ENCODE measurements at regions of chr12 and their contacts with region 1.

Region 1: GRCh38 chr12:130013771-130014484 is 110.1 kb upstream of the TMEM132D start:
- DNase-seq: peak; percentile 62 to 87
- H3K4me3 ChIP-seq: peak overlapping the region in 1 of 4 experiments; percentile 45; a peak in 2 of 8 replicates
- H3K27ac ChIP-seq: no peak overlapping the region
- H3K4me1 ChIP-seq: peaks cover 0 to 11% (median 5%) of the 10 kb centered on the region in 4 experiments; a peak in 3 of 7 replicates
- H3K27me3 ChIP-seq: peaks cover 0 to 12% (median 7%) of the 10 kb centered on the region in 4 experiments; a peak in 3 of 7 replicates
- CTCF ChIP-seq: peak; percentile 81 to 92 (median 83)
- EP300 ChIP-seq: no peak
- POLR2A ChIP-seq: no peak
- RAD21 ChIP-seq: peak; percentile 88 to 93

Region 2: DNA sequence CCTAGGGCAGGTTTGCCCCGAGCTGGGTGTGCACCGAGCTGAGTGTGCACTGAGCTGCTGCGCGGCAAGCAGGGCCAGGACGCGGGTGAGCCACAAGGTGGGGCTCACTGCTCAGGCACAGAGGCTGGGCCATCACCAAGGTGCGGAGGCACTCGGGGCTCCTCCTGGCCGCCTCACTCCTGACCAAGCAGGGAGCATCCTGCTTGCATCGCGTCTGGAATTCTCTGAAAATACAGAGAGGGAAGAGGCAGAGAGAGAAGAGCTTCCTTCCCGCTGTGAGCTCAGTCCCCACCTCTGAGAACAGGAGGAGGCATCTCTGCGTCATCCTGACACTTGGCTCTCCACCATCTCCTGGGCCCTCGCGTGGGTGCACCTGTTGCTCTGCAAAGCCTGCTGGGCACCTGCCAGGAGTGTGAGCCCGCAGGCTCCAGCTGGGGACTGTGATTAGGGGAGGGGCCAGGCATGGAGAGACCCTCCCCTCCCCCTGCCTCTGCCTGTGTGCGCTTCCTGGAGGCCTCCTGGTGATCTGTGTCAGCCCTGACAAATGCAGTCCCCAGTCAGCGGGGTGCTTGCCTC is 1044.4 kb before region 1 on chr12:
- CTCF ChIA-PET with region 1: interaction called, 14 read pairs
- POLR2A ChIA-PET with region 1: no interaction called
- DNase-seq: peak; percentile 50 to 82
- H3K4me3 ChIP-seq: peak overlapping the region in 3 of 4 experiments; percentile 28 to 53 (median 40); a peak in 5 of 8 replicates
- H3K27ac ChIP-seq: no peak overlapping the region
- H3K4me1 ChIP-seq: peaks cover 4 to 41% (median 19%) of the 10 kb centered on the region in 4 experiments
- H3K27me3 ChIP-seq: peaks cover 0 to 17% (median 10%) of the 10 kb centered on the region in 4 experiments; a peak in 6 of 7 replicates
- CTCF ChIP-seq: peak; percentile 89 to 96 (median 96)
- EP300 ChIP-seq: no peak
- POLR2A ChIP-seq: no peak
- RAD21 ChIP-seq: peak; percentile 95 to 97

Region 3: GRCh38 chr12:129887117-129887516 is 126.8 kb before region 1 on chr12:
- CTCF ChIA-PET with region 1: no interaction called
- POLR2A ChIA-PET with region 1: no interaction called
- DNase-seq: peak in 1 of 2 experiments; percentile 39
- H3K4me3 ChIP-seq: no peak overlapping the region
- H3K27ac ChIP-seq: no peak overlapping the region
- H3K4me1 ChIP-seq: peaks cover 0 to 3% (median 1%) of the 10 kb centered on the region in 4 experiments; a peak in 2 of 7 replicates
- H3K27me3 ChIP-seq: no peaks in the 10 kb centered on the region
- CTCF ChIP-seq: no peak
- EP300 ChIP-seq: no peak
- POLR2A ChIP-seq: no peak
- RAD21 ChIP-seq: no peak

Region 4: GRCh38 chr12:129911428-129912049 is 102.4 kb before region 1 on chr12:
- CTCF ChIA-PET with region 1: interaction called, 59 read pairs
- POLR2A ChIA-PET with region 1: no interaction called
- DNase-seq: peak in 1 of 2 experiments; percentile 77
- H3K4me3 ChIP-seq: no peak overlapping the region
- H3K27ac ChIP-seq: no peak overlapping the region
- H3K4me1 ChIP-seq: 0 out of 7 replicates have a peak, but pooled peaks cover 0 to 3% (median 0%) of the 10 kb centered on the region in 4 experiments
- H3K27me3 ChIP-seq: peaks cover 0 to 6% (median 6%) of the 10 kb centered on the region in 4 experiments; a peak in 5 of 7 replicates
- CTCF ChIP-seq: peak; percentile 92 to 94 (median 92)
- EP300 ChIP-seq: no peak
- POLR2A ChIP-seq: no peak
- RAD21 ChIP-seq: peak; percentile 100

Region 5: DNA sequence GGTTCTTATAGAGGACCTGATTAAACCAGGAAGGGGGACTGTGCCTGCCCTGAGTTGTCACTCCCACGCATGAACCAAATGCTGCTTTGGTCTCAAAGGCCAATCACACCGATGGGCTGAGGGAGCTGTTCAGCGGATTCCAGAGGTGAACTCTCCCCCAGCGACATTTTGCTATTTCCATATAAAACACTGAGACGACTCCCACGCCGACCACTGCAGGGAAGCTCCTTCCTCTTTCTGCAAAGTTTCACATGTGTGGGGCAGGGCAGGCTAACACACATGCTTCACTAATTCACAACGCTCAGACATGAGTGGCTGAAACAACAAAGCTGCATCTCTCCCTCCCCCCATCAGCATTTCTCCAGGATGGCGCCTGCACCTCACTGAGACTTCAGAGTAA is 72.3 kb before region 1 on chr12:
- CTCF ChIA-PET with region 1: interaction called, 12 read pairs
- POLR2A ChIA-PET with region 1: no interaction called
- DNase-seq: no peak
- H3K4me3 ChIP-seq: no peak overlapping the region
- H3K27ac ChIP-seq: no peak overlapping the region
- H3K4me1 ChIP-seq: peaks cover 0 to 7% (median 3%) of the 10 kb centered on the region in 4 experiments; a peak in 5 of 7 replicates
- H3K27me3 ChIP-seq: peaks cover 0 to 8% (median 2%) of the 10 kb centered on the region in 4 experiments; a peak in 4 of 7 replicates
- CTCF ChIP-seq: no peak
- EP300 ChIP-seq: no peak
- POLR2A ChIP-seq: no peak
- RAD21 ChIP-seq: no peak

Region 6: DNA sequence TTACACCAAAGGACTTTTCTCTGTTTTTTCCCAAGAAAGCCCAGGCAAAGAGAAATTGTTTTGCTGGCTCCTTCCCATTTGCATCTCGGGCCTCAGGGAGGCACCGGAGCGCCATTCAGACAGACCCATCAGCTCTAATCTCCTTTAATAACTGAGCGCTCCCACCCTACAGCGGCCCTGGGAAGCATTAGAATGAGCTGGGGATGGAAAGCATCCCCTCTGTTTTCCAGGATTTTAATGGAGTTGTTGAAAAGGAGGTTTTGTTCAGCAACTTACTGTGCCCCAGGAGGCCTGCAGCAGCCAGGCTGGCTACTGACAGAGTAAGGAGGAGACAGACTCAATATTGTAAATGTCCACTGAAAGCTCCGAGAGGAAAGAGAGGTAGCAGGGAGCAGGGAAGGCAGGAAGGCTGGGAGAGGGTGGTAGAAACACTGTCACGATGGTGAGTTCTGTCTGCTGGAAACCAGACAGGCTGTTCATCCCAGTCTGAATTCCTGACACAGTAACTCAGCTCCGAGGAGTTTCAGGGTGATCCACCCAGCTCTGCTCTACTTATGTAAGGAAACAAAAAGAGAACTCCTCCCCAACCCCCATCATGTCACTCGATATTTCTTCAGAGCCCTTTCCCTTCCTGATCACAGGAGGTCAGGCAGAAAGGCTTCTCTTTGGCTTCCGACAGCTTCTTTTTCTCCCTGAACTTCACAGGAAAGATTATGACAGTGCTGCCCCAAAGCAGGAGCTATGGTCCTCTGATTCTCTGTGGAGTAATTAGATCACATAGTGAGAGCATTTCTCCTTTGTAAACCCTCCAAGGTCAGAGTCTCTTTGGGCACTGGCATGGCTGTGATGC is 47.6 kb before region 1 on chr12:
- CTCF ChIA-PET with region 1: interaction called, 62 read pairs
- POLR2A ChIA-PET with region 1: interaction called, 3 read pairs
- DNase-seq: peak; percentile 10 to 53
- H3K4me3 ChIP-seq: no peak overlapping the region; a peak in 2 of 8 replicates
- H3K27ac ChIP-seq: no peak overlapping the region
- H3K4me1 ChIP-seq: peaks cover 0 to 3% (median 0%) of the 10 kb centered on the region in 4 experiments; a peak in 5 of 7 replicates
- H3K27me3 ChIP-seq: peaks cover 0 to 3% (median 0%) of the 10 kb centered on the region in 4 experiments; a peak in 3 of 7 replicates
- CTCF ChIP-seq: peak; percentile 18 to 46 (median 33)
- EP300 ChIP-seq: no peak
- POLR2A ChIP-seq: no peak
- RAD21 ChIP-seq: peak; percentile 55 to 73

Region 7: DNA sequence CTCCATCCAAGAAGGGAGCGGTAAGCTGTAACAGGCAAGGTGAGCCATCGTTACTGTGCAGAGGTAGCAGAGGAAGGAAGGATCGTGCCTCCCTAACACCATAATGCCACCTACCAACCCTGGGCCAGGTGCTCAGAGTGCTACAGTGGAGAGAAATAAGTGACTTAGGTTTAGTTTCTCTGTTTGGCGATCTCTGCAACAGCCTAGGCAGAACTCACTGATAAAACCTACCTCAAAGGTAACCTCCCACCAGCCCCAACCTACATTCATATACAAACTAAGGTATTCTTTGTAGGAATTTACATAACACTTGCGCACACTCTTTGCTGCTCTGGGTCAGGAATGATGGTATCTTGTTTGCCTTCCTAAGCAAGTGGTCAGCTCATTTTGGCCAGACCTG is 16.7 kb before region 1 on chr12:
- CTCF ChIA-PET with region 1: interaction called, 89 read pairs
- POLR2A ChIA-PET with region 1: no interaction called
- DNase-seq: peak in 1 of 2 experiments; percentile 34
- H3K4me3 ChIP-seq: peak overlapping the region in 3 of 4 experiments; percentile 22 to 44 (median 23); a peak in 3 of 8 replicates
- H3K27ac ChIP-seq: peak overlapping the region; percentile 74
- H3K4me1 ChIP-seq: peaks cover 6 to 23% (median 22%) of the 10 kb centered on the region in 4 experiments; a peak in 6 of 7 replicates
- H3K27me3 ChIP-seq: peaks cover 0 to 5% (median 2%) of the 10 kb centered on the region in 4 experiments; a peak in 3 of 7 replicates
- CTCF ChIP-seq: no peak
- EP300 ChIP-seq: no peak
- POLR2A ChIP-seq: peak in 1 of 2 experiments; percentile 52; a peak in 1 of 3 replicates
- RAD21 ChIP-seq: no peak